CD8-positive, alpha-beta memory T cell (primary cell): ENCODE measurements at regions of chr3 and their contacts with region 1.

Region 1: GRCh38 chr3:101724329-101725193 is at the start of gene CEP97:
- DNase-seq: peak; percentile 79 to 90 (median 84)
- H3K4me3 ChIP-seq: peak within 1 kb of the TSS; percentile 99
- H3K4me3 Mint-ChIP-seq: peak within 1 kb of the TSS; percentile 96 to 100 (median 98)
- H3K27ac ChIP-seq: peak within 1 kb of the TSS; percentile 73
- H3K27ac Mint-ChIP-seq: peak within 1 kb of the TSS; percentile 89 to 99 (median 97)
- H3K4me1 ChIP-seq: peaks cover 29% of the 10 kb centered on the region
- H3K4me1 Mint-ChIP-seq: peaks cover 36 to 60% (median 53%) of the 10 kb centered on the region in 3 donors
- H3K27me3 ChIP-seq: no peaks in the 10 kb centered on the region
- H3K27me3 Mint-ChIP-seq: no peaks in the 10 kb centered on the region
- total RNA-seq, gene CEP97: 16.6 to 17.3 TPM

Region 2: GRCh38 chr3:101531473-101532086 is 193.0 kb before region 1 on chr3:
- CTCF ChIA-PET with region 1: no interaction called
- POLR2A ChIA-PET with region 1: no interaction called
- DNase-seq: no peak
- H3K4me3 ChIP-seq: no peak overlapping the region
- H3K4me3 Mint-ChIP-seq: peak overlapping the region in 3 of 7 donors; percentile 24 to 41 (median 33)
- H3K27ac ChIP-seq: peak overlapping the region; percentile 13
- H3K27ac Mint-ChIP-seq: peak overlapping the region in 7 of 8 donors; percentile 3 to 86 (median 78)
- H3K4me1 ChIP-seq: peaks cover 33% of the 10 kb centered on the region
- H3K4me1 Mint-ChIP-seq: peaks cover 21 to 34% (median 32%) of the 10 kb centered on the region in 3 donors
- H3K27me3 ChIP-seq: no peaks in the 10 kb centered on the region
- H3K27me3 Mint-ChIP-seq: no peaks in the 10 kb centered on the region

Region 3: GRCh38 chr3:101676765-101677435 is 47.7 kb before region 1 on chr3 and contains the start of gene ZBTB11:
- CTCF ChIA-PET with region 1: interaction called, 4 read pairs
- POLR2A ChIA-PET with region 1: interaction called, 12 read pairs
- DNase-seq: peak; percentile 99 to 100 (median 99)
- H3K4me3 ChIP-seq: peak within 1 kb of the TSS; percentile 90
- H3K4me3 Mint-ChIP-seq: peak within 1 kb of the TSS; percentile 95 to 98 (median 96)
- H3K27ac ChIP-seq: peak within 1 kb of the TSS; percentile 99
- H3K27ac Mint-ChIP-seq: peak within 1 kb of the TSS; percentile 96 to 100 (median 98)
- H3K4me1 ChIP-seq: peaks cover 26% of the 10 kb centered on the region
- H3K4me1 Mint-ChIP-seq: peaks cover 41 to 67% (median 57%) of the 10 kb centered on the region in 3 donors
- H3K27me3 ChIP-seq: no peaks in the 10 kb centered on the region
- H3K27me3 Mint-ChIP-seq: peaks cover 0 to 3% of the 10 kb centered on the region in 2 donors
- total RNA-seq, gene ZBTB11: 28.9 to 29.7 TPM

Region 4: DNA sequence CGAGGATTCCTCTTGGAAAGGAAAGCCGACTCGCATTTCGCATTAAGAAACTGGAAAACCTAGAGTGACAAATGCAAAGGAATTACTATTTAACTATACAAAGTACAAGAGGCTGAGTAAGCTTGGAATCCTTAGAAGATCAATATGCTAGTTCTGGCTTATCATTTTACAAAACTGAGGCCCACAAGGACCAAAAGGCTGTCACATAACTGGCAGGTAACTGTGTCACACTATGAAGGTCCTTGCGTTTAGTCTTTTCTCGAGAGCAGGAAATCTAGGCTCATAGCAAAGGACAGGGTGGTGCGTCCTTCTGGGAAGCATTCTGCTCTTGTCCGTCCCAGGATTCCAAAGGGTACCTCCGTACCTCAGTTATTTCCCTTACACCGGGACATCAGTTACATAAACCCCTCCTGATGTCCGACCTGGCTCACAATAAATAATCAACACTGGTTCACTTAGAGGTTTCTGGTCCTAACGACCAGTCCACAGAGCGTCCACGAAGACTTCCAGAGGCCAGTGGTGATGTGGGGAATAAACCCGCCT is 38.6 kb before region 1 on chr3:
- CTCF ChIA-PET with region 1: interaction called, 4 read pairs
- POLR2A ChIA-PET with region 1: interaction called, 13 read pairs
- DNase-seq: no peak
- H3K4me3 ChIP-seq: peak overlapping the region; percentile 94
- H3K4me3 Mint-ChIP-seq: peak overlapping the region; percentile 98 to 100 (median 100)
- H3K27ac ChIP-seq: peak overlapping the region; percentile 95
- H3K27ac Mint-ChIP-seq: peak overlapping the region; percentile 96 to 100 (median 99)
- H3K4me1 ChIP-seq: peaks cover 34% of the 10 kb centered on the region
- H3K4me1 Mint-ChIP-seq: peaks cover 34 to 56% (median 47%) of the 10 kb centered on the region in 3 donors
- H3K27me3 ChIP-seq: no peaks in the 10 kb centered on the region
- H3K27me3 Mint-ChIP-seq: no peaks in the 10 kb centered on the region

Region 5: DNA sequence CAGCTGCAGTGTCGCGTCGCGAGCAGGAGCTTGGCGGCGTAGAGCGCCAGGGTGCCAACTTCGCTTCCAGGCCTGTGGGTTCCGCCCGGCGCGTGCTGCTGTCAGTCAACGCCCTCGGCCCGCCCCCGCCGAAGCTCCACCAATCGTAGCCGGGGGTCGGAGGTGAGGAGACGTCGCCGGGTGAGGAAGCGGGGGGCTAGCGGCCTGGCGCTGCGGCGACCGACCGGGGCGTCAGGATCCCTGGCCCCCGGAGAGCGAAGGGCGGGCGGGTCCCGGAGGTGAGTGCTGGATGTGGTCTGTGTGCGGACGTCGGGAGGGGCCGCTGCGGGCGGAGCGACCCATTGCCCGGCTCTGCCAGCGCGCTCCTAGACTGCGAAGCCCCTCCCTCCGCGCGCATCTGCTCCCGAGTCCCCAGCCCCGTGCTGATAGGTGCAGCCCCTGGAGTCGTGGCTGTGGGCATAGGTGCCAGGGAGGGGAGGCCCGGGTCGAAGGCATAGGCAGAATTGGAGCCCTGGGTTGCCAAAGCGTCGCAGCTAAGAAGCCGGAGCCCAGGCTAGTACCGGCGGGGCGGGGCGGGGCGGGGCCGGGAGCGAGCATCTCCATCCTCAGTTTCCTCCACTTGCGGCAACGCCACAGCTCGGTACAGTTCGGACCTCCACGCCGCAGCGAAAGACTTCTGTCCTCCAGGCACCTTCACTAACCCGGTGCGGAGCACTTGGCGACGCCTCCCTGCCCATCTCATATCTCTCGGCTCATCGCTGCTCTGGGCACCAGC is 54.7 kb after region 1 on chr3 and contains the start of gene NXPE3:
- CTCF ChIA-PET with region 1: interaction called, 7 read pairs
- POLR2A ChIA-PET with region 1: interaction called, 15 read pairs
- DNase-seq: peak; percentile 93 to 97 (median 94)
- H3K4me3 ChIP-seq: peak within 1 kb of the TSS; percentile 68
- H3K4me3 Mint-ChIP-seq: peak within 1 kb of the TSS; percentile 89 to 97 (median 94)
- H3K27ac ChIP-seq: peak within 1 kb of the TSS; percentile 80
- H3K27ac Mint-ChIP-seq: peak within 1 kb of the TSS; percentile 97 to 99 (median 98)
- H3K4me1 ChIP-seq: peaks cover 46% of the 10 kb centered on the region
- H3K4me1 Mint-ChIP-seq: peaks cover 42 to 52% (median 52%) of the 10 kb centered on the region in 3 donors
- H3K27me3 ChIP-seq: no peaks in the 10 kb centered on the region
- H3K27me3 Mint-ChIP-seq: peaks cover 0 to 3% of the 10 kb centered on the region in 2 donors
- total RNA-seq, gene NXPE3: 16.2 to 17.2 TPM